AG04449 (cell line): ENCODE measurements at regions of chr11 and their contacts with region 1.

Region 1: GRCh38 chr11:61747192-61747966 is 5.1 kb upstream of the MYRF start:
- DNase-seq: no peak
- H3K4me3 ChIP-seq: no peak overlapping the region
- CTCF ChIP-seq: peak; percentile 97

Region 2: DNA sequence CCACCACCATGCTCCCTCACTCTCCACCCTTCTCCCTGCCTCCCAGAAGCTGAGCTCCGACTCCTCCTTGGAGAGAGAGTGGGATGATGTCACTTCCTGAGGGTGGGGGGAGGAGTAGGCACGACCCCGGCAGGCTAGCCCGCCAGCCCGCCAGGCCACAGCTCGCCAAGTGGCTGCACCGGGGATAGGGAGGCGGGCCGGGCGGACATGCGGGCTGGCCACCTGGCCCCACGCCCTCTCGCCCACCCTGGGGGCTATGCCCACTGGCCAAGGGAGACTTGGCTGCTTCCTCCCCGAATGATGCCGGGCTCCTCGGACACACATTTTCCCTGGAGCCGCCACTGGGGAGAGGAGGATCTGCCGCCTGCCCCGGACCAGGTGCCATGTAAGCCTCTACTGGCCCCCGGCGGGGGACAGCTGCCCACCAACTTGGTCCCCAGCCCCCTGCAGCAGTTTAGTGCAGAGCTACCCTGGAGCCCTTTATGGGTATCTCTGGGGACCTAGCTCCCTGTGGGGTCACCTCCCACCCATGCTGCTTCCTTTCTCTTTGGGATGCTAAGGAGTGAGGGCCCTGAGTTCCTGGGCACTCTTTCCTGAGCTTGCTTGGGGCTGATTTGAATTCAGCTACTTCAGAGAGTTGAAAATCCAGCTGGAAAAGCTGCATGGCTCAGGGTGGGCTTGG is 28.6 kb before region 1 on chr11:
- CTCF ChIA-PET with region 1: interaction called, 17 read pairs
- POLR2A ChIA-PET with region 1: no interaction called
- DNase-seq: no peak
- H3K4me3 ChIP-seq: peak overlapping the region; percentile 67
- CTCF ChIP-seq: no peak

Region 3: GRCh38 chr11:61769169-61769920 is 22.0 kb after region 1 on chr11:
- CTCF ChIA-PET with region 1: interaction called, 97 read pairs
- POLR2A ChIA-PET with region 1: no interaction called
- DNase-seq: no peak
- H3K4me3 ChIP-seq: no peak overlapping the region
- CTCF ChIP-seq: peak; percentile 48

Region 4: GRCh38 chr11:61776551-61777075 is 29.2 kb after region 1 on chr11:
- CTCF ChIA-PET with region 1: interaction called, 97 read pairs
- POLR2A ChIA-PET with region 1: no interaction called
- DNase-seq: no peak
- H3K4me3 ChIP-seq: no peak overlapping the region
- CTCF ChIP-seq: peak; percentile 80

Region 5: GRCh38 chr11:61841636-61842527 is 94.5 kb after region 1 on chr11:
- CTCF ChIA-PET with region 1: no interaction called
- POLR2A ChIA-PET with region 1: no interaction called
- DNase-seq: no peak
- H3K4me3 ChIP-seq: no peak overlapping the region
- CTCF ChIP-seq: no peak